Activated CD4-positive, alpha-beta memory T cell treated with anti-CD3 and anti-CD28 coated beads, Interleukin-2, amount 10 ng/mL, durations not matched to agents 7 days and 5 days (primary cell): ENCODE measurements at regions of chr5 and their contacts with region 1.

Region 1: GRCh38 chr5:52915176-52915875 is 73.8 kb upstream of the ITGA2 start:
- DNase-seq: peak; percentile 54
- H3K4me3 Mint-ChIP-seq: no peak overlapping the region
- H3K27ac Mint-ChIP-seq: no peak overlapping the region
- H3K4me1 Mint-ChIP-seq: peaks cover 6% of the 10 kb centered on the region
- H3K27me3 Mint-ChIP-seq: peaks cover 3% of the 10 kb centered on the region

Region 2: GRCh38 chr5:52658246-52658645 is 257.1 kb before region 1 on chr5:
- CTCF ChIA-PET with region 1: interaction called, 10 read pairs
- POLR2A ChIA-PET with region 1: no interaction called
- DNase-seq: no peak
- H3K4me3 Mint-ChIP-seq: no peak overlapping the region
- H3K27ac Mint-ChIP-seq: no peak overlapping the region
- H3K4me1 Mint-ChIP-seq: no peaks in the 10 kb centered on the region
- H3K27me3 Mint-ChIP-seq: peaks cover 14% of the 10 kb centered on the region

Region 3: DNA sequence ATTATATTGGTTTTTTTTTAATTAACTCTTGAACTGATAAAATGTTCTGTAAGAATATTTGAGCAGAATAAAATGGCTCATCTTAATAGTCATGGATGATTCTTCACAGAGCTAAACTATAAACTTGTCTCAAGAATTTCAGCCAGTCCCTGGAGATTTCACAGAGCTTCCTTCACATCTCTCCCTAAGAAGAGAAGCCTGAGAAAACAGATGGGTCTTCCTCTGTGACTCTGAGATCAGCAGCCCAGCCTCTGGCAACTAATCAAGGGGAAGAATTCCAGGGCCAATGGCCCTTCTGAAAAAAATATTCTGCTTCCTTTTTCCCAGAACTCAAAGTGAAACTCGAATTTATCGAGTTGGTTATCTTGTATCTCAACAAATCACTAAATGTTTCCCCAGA is 249.8 kb before region 1 on chr5:
- CTCF ChIA-PET with region 1: interaction called, 23 read pairs
- POLR2A ChIA-PET with region 1: no interaction called
- DNase-seq: no peak
- H3K4me3 Mint-ChIP-seq: no peak overlapping the region
- H3K27ac Mint-ChIP-seq: no peak overlapping the region
- H3K4me1 Mint-ChIP-seq: peaks cover 7% of the 10 kb centered on the region
- H3K27me3 Mint-ChIP-seq: peaks cover 19% of the 10 kb centered on the region

Region 4: DNA sequence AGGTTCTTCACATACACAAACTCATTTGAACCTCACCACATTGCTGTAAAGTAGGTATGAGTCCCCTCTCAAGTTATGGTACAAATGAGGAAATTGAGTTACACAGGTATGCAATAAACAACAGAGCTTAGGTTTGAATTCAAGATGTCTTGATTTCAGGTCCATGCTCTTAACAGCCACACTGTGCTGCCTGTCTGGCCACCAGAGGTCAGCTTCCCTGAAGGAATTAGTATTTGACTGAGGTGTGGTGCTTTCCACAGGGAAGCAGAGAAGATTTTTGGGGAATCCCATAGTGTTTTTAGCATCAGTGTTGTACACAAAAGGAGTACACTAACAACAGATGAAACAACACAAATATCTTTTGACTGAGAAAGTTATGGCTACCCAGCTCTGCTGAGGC is 222.0 kb before region 1 on chr5:
- CTCF ChIA-PET with region 1: interaction called, 13 read pairs
- POLR2A ChIA-PET with region 1: no interaction called
- DNase-seq: peak; percentile 33
- H3K4me3 Mint-ChIP-seq: no peak overlapping the region
- H3K27ac Mint-ChIP-seq: no peak overlapping the region
- H3K4me1 Mint-ChIP-seq: peaks cover 4% of the 10 kb centered on the region
- H3K27me3 Mint-ChIP-seq: peaks cover 10% of the 10 kb centered on the region

Region 5: DNA sequence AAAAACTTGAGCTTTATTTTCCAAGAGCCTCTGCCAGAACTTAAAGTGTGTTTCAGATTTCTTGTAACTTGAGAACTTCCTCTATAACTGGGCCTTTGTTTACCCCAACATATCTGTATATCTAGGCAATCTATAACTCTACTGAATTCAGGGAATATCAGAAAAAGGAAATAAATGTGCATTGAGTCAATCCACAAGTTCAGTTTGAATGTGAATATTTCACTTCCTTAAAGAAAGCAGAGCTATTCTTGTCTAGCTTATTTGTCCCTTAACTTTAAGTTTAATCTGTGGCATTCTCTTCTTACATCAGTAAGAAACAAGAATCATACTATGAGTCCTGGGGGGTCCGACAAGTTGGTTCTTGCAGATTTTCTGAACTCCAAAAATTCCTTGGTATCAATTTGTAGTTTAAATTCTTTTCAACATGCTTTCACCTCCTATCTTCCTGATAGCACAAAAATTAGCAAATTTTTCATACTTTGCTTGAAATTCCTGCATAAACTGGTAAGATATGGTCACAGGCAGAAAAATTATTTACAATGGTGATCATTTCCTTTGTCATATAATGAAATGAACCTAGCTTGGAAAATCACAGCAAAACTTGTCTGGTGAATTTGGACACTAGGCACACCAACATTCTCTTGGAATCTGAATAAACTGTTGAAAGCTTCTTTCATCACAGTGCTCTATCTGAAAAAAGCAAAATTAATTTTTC is 147.4 kb before region 1 on chr5:
- CTCF ChIA-PET with region 1: no interaction called
- POLR2A ChIA-PET with region 1: no interaction called
- DNase-seq: no peak
- H3K4me3 Mint-ChIP-seq: no peak overlapping the region
- H3K27ac Mint-ChIP-seq: no peak overlapping the region
- H3K4me1 Mint-ChIP-seq: peaks cover 46% of the 10 kb centered on the region
- H3K27me3 Mint-ChIP-seq: peaks cover 4% of the 10 kb centered on the region

Region 6: DNA sequence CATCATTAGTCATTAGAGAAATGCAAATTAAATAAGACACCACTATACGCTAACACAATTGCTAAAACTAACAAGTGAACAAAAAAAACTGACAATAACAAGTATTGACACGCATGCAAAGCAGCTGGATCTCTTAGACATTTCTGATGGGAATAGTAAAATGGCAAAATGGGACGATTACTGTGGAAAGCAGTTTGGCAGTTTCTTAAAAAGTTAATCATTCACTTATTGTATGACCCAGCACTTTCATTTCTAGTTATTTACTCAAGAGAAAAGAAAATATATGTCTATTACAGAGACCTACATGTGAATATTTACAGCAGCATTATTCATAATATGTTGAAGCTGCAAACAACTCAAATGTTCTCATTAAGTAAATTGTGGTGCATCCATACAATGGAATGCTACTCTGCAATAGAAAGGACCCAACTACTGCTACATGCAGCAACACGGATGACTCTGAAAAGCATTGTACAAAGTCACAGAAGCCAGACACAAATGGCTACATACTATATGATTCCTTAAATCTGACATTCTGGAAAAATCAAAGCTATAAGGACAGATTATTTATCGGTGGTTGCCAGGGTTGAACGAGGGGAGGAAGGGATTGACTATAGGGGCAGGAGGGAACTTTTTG is 23.0 kb before region 1 on chr5:
- CTCF ChIA-PET with region 1: no interaction called
- POLR2A ChIA-PET with region 1: no interaction called
- DNase-seq: no peak
- H3K4me3 Mint-ChIP-seq: no peak overlapping the region
- H3K27ac Mint-ChIP-seq: no peak overlapping the region
- H3K4me1 Mint-ChIP-seq: no peaks in the 10 kb centered on the region
- H3K27me3 Mint-ChIP-seq: peaks cover 3% of the 10 kb centered on the region